ENCODE measurements at regions of chr3 and their contacts with region 1.

Region 1: GRCh38 chr3:48439820-48440589 is at the starts of genes CCDC51 and TMA7:
- H3K4me3 ChIP-seq: peak within 1 kb of the TSS; percentile 84
- H3K27ac ChIP-seq: peak within 1 kb of the TSS; percentile 67
- H3K4me1 ChIP-seq: no peaks in the 10 kb centered on the region
- CTCF ChIP-seq: peak; percentile 48; the same call in 1 of the 2 replicates

Region 2: DNA sequence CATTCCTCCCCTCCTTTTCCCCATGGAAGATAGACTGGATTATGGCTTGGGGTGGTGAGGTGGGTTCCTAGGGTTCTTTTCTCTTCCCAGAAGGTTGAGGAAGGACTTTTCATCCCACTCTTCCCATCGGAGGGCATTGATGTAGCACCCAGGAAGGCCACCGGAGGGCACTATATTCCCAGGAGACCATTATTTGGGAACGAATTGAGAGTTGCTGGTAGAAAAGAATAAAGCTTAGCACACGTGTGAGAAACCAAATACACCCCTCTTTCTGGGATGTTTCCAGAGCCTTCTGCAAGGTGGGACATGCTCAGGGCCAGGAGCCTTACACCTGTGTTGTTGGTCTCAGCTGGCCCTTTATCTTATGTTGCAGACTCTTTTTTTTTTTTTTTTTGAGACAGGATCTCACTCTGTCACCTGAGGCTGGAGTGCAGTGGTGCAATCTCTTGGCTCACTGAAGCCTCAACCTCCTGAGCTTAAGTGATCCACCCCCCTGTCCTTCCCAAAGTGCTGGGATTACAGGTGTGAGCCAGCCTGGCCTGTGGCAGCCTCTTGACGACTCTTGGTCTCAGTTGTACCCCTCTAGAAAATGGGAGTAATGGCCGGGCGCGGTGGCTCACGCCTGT is 245.4 kb before region 1 on chr3:
- CTCF ChIA-PET with region 1: interaction called, 47 read pairs
- POLR2A ChIA-PET with region 1: no interaction called
- H3K4me3 ChIP-seq: no peak overlapping the region
- H3K27ac ChIP-seq: no peak overlapping the region
- H3K4me1 ChIP-seq: no peaks in the 10 kb centered on the region
- CTCF ChIP-seq: 0 out of 2 replicates have a peak, but pooled peaks have one; percentile 37

Region 3: DNA sequence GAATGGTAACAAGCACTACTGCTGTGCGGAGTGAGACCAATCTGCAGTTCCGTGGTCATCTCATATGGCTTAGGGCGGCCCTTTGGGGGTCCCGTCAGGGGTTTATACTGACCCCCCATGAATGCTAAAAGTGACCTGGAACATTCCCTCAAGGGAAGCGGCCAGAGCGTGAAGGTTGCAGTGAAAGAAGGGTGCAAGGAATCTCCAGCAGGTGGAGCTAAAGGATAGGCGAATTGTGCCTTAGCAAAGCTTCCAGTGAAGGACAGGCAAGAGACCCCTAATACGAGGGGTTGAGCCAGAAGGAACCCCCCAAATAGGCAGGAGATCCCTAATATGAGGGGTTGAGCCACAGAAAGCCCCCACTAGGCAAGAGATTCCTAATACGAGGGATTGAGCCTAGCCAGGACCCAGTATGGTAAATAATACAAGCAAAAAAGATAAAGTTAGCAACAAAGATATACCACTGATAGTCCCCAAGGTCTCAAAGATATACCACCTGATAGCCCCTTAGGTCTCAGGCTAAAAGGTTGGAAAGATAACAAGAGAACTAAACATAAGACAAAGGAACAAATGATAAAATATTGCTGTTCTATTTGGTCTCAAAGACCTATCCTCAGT is 166.3 kb before region 1 on chr3:
- CTCF ChIA-PET with region 1: interaction called, 97 read pairs
- POLR2A ChIA-PET with region 1: interaction called, 5 read pairs
- H3K4me3 ChIP-seq: no peak overlapping the region
- H3K27ac ChIP-seq: no peak overlapping the region
- H3K4me1 ChIP-seq: no peaks in the 10 kb centered on the region
- CTCF ChIP-seq: no peak

Region 4: GRCh38 chr3:48395714-48396113 is 44.3 kb before region 1 on chr3:
- CTCF ChIA-PET with region 1: interaction called, 238 read pairs
- POLR2A ChIA-PET with region 1: interaction called, 13 read pairs
- H3K4me3 ChIP-seq: no peak overlapping the region
- H3K27ac ChIP-seq: no peak overlapping the region
- H3K4me1 ChIP-seq: no peaks in the 10 kb centered on the region
- CTCF ChIP-seq: no peak

Region 5: DNA sequence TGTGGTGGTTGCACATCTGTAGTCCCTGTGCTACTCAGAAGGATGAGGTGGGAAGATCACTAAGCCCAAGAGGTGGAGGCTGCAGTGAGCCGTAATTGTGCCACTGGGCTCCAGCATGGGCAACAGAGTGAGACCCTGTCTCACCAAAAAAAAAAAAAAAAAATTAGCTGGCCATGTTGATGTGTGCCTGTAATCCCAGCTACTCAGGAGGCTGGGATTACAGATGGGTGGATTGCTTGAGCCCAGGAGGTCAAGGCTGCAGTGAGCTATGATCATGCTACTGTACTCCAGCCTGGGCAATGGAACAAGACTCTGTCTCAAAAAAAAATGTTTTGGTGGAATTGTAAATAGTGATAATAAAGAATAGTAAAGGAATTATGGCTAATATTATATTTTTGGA is 16.5 kb after region 1 on chr3:
- CTCF ChIA-PET with region 1: interaction called, 10 read pairs
- POLR2A ChIA-PET with region 1: interaction called, 5 read pairs
- H3K4me3 ChIP-seq: no peak overlapping the region
- H3K27ac ChIP-seq: no peak overlapping the region
- H3K4me1 ChIP-seq: no peaks in the 10 kb centered on the region
- CTCF ChIP-seq: no peak

Region 6: DNA sequence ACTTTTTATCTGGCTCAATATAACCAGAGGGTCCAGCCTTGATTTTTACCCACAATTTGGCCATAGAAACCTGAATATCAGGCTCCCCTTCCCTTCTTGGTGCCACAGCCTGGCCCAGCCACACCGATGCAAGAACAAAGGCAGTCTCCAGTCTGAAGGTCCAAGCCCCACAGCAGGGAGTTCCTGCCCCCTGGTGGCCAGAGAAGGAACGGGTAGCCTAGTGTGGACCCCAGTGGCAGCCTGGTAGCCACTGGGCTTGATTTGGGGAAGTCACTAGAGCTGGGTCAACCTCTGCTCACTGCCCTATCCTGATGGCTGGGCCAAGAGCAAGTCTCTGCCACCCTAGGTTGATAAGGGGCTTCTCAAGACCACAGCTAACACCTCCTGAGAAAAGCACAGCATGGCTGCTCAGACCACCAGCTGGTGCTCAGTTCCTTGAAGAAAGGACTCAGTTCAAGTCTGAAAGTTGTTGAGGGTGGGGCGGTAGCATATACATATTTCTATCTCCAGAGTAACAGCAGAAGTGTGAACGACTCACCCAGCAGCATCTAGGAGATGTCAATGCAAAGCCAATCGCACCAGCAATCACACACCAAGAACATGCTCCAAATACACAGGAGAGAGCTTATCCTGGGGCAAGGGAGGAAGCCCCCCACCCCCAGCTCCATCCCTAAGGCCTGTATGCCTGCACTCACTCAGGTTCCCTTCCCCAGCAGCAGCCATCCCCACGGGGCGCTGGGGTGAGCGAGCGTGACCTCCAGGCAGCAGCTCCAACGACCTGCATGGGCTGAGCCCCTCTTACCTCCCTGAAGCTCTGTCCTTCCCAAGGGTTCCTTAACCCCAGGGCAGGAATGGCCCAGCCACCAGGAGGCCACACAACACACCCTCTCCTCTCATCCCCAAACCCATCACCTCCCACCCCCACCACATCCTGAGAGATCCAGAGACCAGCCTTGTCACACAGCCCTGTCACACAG is 109.0 kb after region 1 on chr3:
- CTCF ChIA-PET with region 1: interaction called, 47 read pairs
- POLR2A ChIA-PET with region 1: interaction called, 3 read pairs
- H3K4me3 ChIP-seq: no peak overlapping the region
- H3K27ac ChIP-seq: no peak overlapping the region
- H3K4me1 ChIP-seq: no peaks in the 10 kb centered on the region
- CTCF ChIP-seq: peak; percentile 71

Region 7: DNA sequence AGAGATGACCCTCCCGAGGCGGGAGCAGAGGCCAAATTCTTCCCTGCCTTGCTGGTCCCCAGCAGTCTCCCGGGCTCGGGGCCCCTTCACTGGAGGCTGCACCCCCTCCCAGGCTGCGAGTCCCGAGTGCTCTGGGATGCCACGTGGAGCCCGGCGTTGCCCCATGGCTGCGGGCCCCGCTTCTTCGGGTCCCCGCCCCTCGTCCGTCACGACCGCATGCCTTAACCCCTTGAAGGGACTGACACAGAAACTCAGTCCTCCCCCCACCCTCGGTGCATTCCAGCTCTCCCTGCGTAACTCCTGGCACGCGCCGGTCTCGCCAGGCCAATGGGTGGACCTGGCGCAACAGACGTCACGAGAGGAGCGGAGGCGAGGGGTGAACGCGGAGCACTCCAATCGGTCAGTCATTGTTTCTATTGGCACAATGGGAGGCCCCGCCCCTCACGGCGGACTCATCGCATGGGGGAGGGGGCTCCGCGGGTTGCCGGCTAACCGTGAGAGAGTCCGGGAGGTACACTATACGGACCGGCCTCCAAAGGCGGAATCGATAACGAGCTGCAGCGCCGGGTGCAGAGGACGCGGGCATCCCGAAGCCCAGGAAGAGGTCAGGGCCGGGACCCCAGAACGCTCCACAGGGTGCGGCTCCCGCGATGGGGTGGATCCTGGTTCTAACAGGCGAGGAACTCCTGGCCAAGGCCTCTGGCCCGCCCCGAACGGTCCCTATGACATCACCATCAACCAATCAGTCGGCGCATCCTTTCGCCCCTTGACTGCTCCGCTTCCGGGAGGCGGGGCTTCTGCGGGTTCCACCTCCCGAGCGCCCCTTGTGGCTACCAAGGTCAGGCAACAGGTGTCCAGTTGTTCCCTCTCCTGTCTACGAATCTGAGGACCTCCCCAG is 223.7 kb after region 1 on chr3:
- CTCF ChIA-PET with region 1: no interaction called
- POLR2A ChIA-PET with region 1: no interaction called
- H3K4me3 ChIP-seq: peak overlapping the region; percentile 60
- H3K27ac ChIP-seq: peak overlapping the region; percentile 51; the same call in 1 of the 2 replicates
- H3K4me1 ChIP-seq: no peaks in the 10 kb centered on the region
- CTCF ChIP-seq: peak; percentile 85